Heart left ventricle (tissue), 16 donors: ENCODE measurements at regions of chr7 and their contacts with region 1.

Region 1: GRCh38 chr7:1193593-1194424 is 33.8 kb upstream of the ZFAND2A start:
- DNase-seq: peak; percentile 41 to 80 (median 55)
- ATAC-seq: peak; percentile 71 to 94 (median 92)
- H3K4me3 ChIP-seq: no peak overlapping the region
- H3K27ac ChIP-seq: no peak overlapping the region
- H3K4me1 ChIP-seq: peaks cover 0 to 8% (median 0%) of the 10 kb centered on the region in 12 donors
- H3K27me3 ChIP-seq: peaks cover 0 to 23% (median 6%) of the 10 kb centered on the region in 9 donors
- CTCF ChIP-seq: peak in 11 of 12 donors; percentile 16 to 61 (median 48)
- POLR2A ChIP-seq: no peak

Region 2: DNA sequence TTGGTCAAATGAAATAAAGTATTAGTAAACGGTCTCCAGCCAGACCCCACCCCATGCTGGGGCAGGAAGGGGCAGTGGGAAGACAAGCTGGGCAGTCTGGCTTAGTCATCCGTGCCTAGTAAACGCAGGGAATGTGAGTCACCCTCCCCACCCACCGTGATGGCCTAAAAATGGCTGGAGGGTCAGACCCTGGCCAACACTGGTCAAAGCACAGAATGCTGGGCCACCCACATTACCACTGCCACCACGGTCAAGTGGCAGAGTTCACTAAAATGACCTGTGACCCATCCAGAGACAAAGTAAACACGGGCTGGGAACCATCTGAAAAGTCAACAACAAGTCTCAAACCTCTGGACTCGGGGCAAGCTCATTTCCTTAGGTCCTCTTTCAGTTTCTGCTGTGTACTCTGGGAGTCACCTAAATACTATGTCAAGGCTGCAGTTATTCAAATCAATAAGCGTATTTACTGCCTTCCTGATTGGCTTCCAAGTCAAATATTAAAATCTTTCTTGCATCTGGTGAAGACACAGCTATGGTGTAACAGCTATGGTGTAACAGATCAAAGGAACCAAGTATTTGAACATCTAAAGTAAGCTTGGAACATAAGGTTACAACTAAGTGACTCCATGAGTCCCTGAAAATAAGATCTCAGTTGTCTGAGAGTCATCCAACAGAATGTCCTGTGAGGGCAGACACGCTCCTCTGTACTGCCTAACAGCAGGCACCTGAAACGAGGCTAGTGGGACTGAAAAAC is 36.9 kb before region 1 on chr7:
- intact Hi-C with region 1: no loop called
- DNase-seq: peak in 1 of 5 donors; percentile 27
- ATAC-seq: no peak
- H3K4me3 ChIP-seq: no peak overlapping the region
- H3K27ac ChIP-seq: no peak overlapping the region
- H3K4me1 ChIP-seq: peaks cover 7 to 26% (median 20%) of the 10 kb centered on the region in 12 donors
- H3K27me3 ChIP-seq: no peaks in the 10 kb centered on the region
- CTCF ChIP-seq: no peak
- POLR2A ChIP-seq: no peak

Region 3: DNA sequence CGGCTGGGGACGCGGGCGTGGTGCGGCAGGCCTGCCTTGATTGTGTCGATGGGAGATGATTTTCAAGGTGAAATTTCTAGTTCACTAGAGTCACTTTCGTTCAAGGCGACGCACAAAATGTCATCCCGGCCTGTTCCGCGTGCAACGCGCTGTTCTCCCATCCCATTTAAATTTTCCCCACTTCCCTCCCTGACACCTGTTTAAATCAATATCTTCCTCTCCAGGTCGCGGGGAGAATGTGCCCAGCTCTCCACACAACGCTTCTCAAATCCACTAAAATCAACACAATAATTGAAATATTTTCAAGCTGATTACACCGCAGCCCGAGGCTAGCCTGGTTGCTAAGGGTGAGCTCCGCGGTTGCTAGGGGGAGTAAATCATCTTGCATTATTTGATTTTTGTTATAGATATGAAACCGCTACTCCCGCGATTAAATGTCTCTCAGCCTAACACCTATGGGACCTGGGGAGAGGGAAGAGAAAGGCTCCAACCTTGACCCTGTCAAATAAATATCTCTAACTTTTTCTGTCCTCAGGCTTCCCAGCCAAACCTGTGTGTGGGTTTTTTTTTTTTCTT is 75.0 kb after region 1 on chr7:
- intact Hi-C with region 1: no loop called
- DNase-seq: peak in 1 of 5 donors; percentile 44
- ATAC-seq: no peak
- H3K4me3 ChIP-seq: no peak overlapping the region
- H3K27ac ChIP-seq: no peak overlapping the region
- H3K4me1 ChIP-seq: no peaks in the 10 kb centered on the region
- H3K27me3 ChIP-seq: peaks cover 8 to 64% (median 19%) of the 10 kb centered on the region in 9 donors
- CTCF ChIP-seq: no peak
- POLR2A ChIP-seq: no peak

Region 4: GRCh38 chr7:1473864-1474512 is 280.2 kb after region 1 on chr7:
- intact Hi-C with region 1: loop called in 1 of 10 experiments (anchors 2 kb)
- DNase-seq: peak; percentile 85 to 91 (median 87)
- ATAC-seq: peak; percentile 52 to 79 (median 72)
- H3K4me3 ChIP-seq: no peak overlapping the region
- H3K27ac ChIP-seq: peak overlapping the region in 1 of 12 donors; percentile 26
- H3K4me1 ChIP-seq: peaks cover 0 to 11% (median 2%) of the 10 kb centered on the region in 12 donors
- H3K27me3 ChIP-seq: no peaks in the 10 kb centered on the region
- CTCF ChIP-seq: peak; percentile 87 to 96 (median 91)
- POLR2A ChIP-seq: no peak

Region 5: GRCh38 chr7:1638215-1638661 is 444.4 kb after region 1 on chr7:
- intact Hi-C with region 1: no loop called
- DNase-seq: no peak
- ATAC-seq: peak; percentile 43 to 65 (median 50)
- H3K4me3 ChIP-seq: no peak overlapping the region
- H3K27ac ChIP-seq: peak overlapping the region in 1 of 12 donors; percentile 16
- H3K4me1 ChIP-seq: no peaks in the 10 kb centered on the region
- H3K27me3 ChIP-seq: peaks cover 0 to 22% (median 0%) of the 10 kb centered on the region in 9 donors
- CTCF ChIP-seq: no peak
- POLR2A ChIP-seq: no peak

Region 6: DNA sequence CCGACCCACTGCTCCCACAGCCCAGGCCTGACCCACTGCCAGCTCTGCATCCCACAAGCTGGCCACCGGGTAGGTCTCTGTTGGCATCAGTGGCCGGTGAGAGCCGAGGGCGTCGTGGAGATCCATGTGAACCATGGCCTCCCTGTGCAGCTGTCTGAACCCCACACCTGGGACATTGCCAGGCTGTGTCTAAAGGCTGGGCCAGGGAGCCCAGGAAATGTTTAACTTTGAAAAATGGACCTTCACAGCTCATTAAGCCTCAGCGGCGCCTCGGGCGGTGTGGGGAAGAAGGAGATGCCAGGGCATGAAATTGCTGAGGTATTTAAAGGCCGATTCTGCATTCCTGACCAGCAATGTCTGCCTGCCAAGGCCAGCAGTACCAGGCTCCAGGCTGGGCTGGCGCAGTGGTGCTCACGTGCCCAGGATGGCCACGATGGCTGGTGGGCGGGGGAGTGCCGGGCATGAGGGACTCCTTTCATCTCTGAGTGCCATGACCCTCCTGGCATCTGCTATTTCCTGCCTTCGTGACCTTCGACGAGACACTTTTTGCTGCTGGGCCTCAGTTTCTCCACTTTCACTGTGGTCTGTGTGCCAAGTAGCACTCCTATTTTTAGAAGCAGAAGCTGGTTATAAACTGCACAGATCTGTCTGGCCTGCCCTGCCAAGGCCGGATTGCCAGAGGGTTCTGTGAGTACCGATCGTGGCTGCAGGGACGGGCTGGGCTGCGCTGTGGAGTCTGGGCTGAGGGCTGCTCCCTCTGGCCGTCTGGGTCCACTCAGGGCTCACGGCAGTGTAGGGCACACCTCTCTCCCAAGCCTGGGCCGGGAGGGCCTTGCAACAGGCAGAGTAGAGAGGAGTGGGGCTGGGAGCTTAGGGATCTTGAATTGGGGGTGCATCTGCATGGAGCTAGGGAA is 498.0 kb after region 1 on chr7:
- intact Hi-C with region 1: no loop called
- DNase-seq: peak; percentile 51 to 82 (median 73)
- ATAC-seq: peak; percentile 87 to 91 (median 88)
- H3K4me3 ChIP-seq: no peak overlapping the region
- H3K27ac ChIP-seq: peak overlapping the region in 11 of 12 donors; percentile 31 to 87 (median 70)
- H3K4me1 ChIP-seq: peaks cover 0 to 40% (median 7%) of the 10 kb centered on the region in 12 donors
- H3K27me3 ChIP-seq: no peaks in the 10 kb centered on the region
- CTCF ChIP-seq: no peak
- POLR2A ChIP-seq: no peak